ENCODE measurements at regions of chr11 and their contacts with region 1.

Region 1: GRCh38 chr11:75525596-75526541 is at the start of gene GDPD5:
- DNase-seq: peak; percentile 94
- total RNA-seq, gene GDPD5: 30.1 to 37.5 TPM

Region 2: DNA sequence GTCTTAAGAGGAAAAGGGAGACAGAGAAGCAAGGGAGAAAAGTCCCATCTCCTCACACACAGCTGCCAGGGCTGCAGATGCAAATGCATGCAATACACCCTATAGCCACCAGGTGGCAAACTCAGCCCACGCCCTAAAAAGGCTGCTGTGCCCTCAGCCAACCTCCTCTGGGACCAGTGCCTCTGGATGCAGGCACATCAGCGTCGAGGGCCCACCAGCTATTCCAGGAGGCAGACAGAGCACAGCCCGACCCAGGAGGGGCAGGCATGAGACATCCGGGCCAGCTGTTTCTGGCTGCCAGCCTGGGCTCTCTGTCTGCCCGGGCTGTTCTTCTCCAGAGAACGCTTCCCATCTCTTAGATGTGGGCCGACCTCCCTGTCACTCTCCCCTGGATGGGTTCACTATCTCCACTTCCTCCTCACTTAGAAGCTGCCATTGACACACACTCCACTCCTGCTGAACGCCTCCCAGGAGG is 245.6 kb before region 1 on chr11:
- intact Hi-C with region 1: loop called in 1 of 2 experiments (anchors 10 kb)
- DNase-seq: peak; percentile 91

Region 3: GRCh38 chr11:75399344-75400145 is 126.3 kb before region 1 on chr11 and contains the start of gene RPS3:
- intact Hi-C with region 1: no loop called
- DNase-seq: peak; percentile 98
- total RNA-seq, gene RPS3: 1,304 to 1,399 TPM

Region 4: GRCh38 chr11:75565221-75565814 is 39.4 kb after region 1 on chr11:
- intact Hi-C with region 1: no loop called
- DNase-seq: peak; percentile 90